ENCODE measurements at regions of chr3 and their contacts with region 1.

Region 1: GRCh38 chr3:73024836-73025235 is 28.2 kb downstream of the PPP4R2 start:
- DNase-seq: peak; percentile 63
- ATAC-seq: peak; percentile 20; the same call in 1 of the 2 replicates
- H3K4me3 ChIP-seq: no peak overlapping the region
- H3K27ac ChIP-seq: no peak overlapping the region
- H3K4me1 ChIP-seq: peaks cover 24% of the 10 kb centered on the region
- H3K27me3 ChIP-seq: no peaks in the 10 kb centered on the region
- CTCF ChIP-seq: no peak

Region 2: DNA sequence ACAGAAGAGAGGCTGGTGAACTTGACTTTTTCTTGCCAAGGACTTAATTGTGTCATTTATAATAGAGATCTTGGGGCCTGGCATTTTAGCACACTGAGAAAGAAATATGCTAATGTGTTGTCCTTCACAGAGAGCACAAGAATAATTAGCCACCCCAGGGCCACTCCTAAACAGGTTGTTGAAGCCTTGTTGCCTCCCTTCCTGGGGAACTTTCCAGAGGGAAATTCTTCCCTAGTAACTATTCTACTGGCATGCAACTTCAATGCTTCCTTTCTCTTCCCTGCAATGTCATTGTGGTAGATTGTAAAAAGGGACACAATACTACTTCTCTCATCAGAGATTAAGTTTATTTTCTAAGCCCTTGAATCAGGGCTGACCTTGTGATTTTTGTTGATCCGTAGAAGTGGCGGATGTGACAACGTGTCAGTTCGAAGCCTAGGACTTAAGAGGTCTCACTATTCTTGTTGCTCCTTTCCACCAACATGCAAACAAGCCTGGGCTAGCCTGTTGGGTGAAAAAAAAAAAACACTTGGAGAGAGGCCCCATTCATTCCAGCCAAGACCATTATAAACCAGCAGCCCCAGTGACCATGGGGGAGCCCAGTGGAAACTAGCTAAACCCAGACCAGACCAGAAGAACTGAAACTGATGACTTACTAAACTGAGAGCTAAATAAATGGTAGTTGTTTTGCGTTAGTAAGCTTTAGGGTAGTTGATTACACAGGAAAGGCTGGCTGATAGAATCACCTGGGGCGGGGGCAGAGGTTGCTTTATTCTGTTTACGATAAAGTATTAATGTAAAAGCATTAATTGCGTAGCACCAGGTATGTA is 463.8 kb before region 1 on chr3:
- CTCF ChIA-PET with region 1: no interaction called
- POLR2A ChIA-PET with region 1: no interaction called
- intact Hi-C with region 1: no loop called
- DNase-seq: no peak
- ATAC-seq: no peak
- H3K4me3 ChIP-seq: no peak overlapping the region
- H3K27ac ChIP-seq: no peak overlapping the region
- H3K4me1 ChIP-seq: no peaks in the 10 kb centered on the region
- H3K27me3 ChIP-seq: no peaks in the 10 kb centered on the region
- CTCF ChIP-seq: no peak

Region 3: DNA sequence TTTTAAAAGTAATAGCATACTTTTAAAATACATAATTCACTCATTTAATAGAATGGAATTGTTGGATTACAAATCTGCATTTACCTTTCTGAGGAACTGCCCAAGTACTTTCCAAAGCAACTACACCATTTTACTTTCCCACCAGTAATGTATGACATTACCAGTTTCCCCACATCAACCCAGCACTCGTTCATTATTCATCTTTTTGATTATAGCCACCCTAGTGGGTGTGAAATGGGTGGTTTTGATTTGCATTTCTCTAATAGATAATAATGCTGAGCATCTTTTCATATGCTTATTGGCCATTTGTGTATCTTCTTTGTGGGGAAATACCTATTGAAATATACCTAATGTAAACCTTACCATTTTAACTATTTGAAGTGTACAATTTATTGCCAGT is 18.6 kb after region 1 on chr3:
- CTCF ChIA-PET with region 1: no interaction called
- POLR2A ChIA-PET with region 1: no interaction called
- intact Hi-C with region 1: loop called (anchors 1 kb)
- DNase-seq: no peak
- ATAC-seq: no peak
- H3K4me3 ChIP-seq: no peak overlapping the region
- H3K27ac ChIP-seq: no peak overlapping the region
- H3K4me1 ChIP-seq: no peaks in the 10 kb centered on the region
- H3K27me3 ChIP-seq: no peaks in the 10 kb centered on the region
- CTCF ChIP-seq: no peak

Region 4: GRCh38 chr3:73432023-73432705 is 407.3 kb after region 1 on chr3:
- CTCF ChIA-PET with region 1: no interaction called
- POLR2A ChIA-PET with region 1: no interaction called
- intact Hi-C with region 1: no loop called
- DNase-seq: peak; percentile 55
- ATAC-seq: no peak
- H3K4me3 ChIP-seq: no peak overlapping the region
- H3K27ac ChIP-seq: no peak overlapping the region
- H3K4me1 ChIP-seq: no peaks in the 10 kb centered on the region
- H3K27me3 ChIP-seq: peaks cover 15% of the 10 kb centered on the region
- CTCF ChIP-seq: peak; percentile 80

Measured in PC-3 (cell line).